Activated T-helper 2 cell treated with anti-CD3 and anti-CD28 coated beads, Interferon-gamma antibody, Interleukin-2, Interleukin-4, amounts not matched to agents 10 μg/mL and 5 μg/mL and 100 μg/mL, durations not matched to agents 14 hours and 24 hours and 36 hours (primary cell): ENCODE measurements at regions of chrX and their contacts with region 1.

Region 1: GRCh38 chrX:20515841-20516461 is 249.2 kb upstream of the RPS6KA3 start:
- DNase-seq: peak; percentile 10
- H3K4me3 Mint-ChIP-seq: no peak overlapping the region
- H3K27ac Mint-ChIP-seq: peak overlapping the region; percentile 89
- H3K4me1 Mint-ChIP-seq: peaks cover 37% of the 10 kb centered on the region
- H3K27me3 Mint-ChIP-seq: peaks cover 17% of the 10 kb centered on the region

Region 2: GRCh38 chrX:20224814-20225487 is 291.0 kb before region 1 on chrX:
- intact Hi-C with region 1: loop called (anchors 10 kb)
- DNase-seq: no peak
- H3K4me3 Mint-ChIP-seq: no peak overlapping the region
- H3K27ac Mint-ChIP-seq: peak overlapping the region; percentile 66
- H3K4me1 Mint-ChIP-seq: peaks cover 25% of the 10 kb centered on the region
- H3K27me3 Mint-ChIP-seq: no peaks in the 10 kb centered on the region

Region 3: GRCh38 chrX:20266810-20267606 is 248.9 kb before region 1 on chrX and contains the start of gene RPS6KA3:
- intact Hi-C with region 1: loop called (anchors 5 kb)
- DNase-seq: peak; percentile 85
- H3K4me3 Mint-ChIP-seq: peak within 1 kb of the TSS; percentile 95
- H3K27ac Mint-ChIP-seq: peak within 1 kb of the TSS; percentile 99
- H3K4me1 Mint-ChIP-seq: peaks cover 16% of the 10 kb centered on the region
- H3K27me3 Mint-ChIP-seq: peaks cover 13% of the 10 kb centered on the region
- total RNA-seq, gene RPS6KA3: 53.1 and 55.3 TPM in 2 replicates

Region 4: GRCh38 chrX:20382518-20383297 is 133.2 kb before region 1 on chrX:
- intact Hi-C with region 1: loop called (anchors 2 kb)
- DNase-seq: peak; percentile 9
- H3K4me3 Mint-ChIP-seq: no peak overlapping the region
- H3K27ac Mint-ChIP-seq: peak overlapping the region; percentile 65
- H3K4me1 Mint-ChIP-seq: peaks cover 25% of the 10 kb centered on the region
- H3K27me3 Mint-ChIP-seq: no peaks in the 10 kb centered on the region

Region 5: DNA sequence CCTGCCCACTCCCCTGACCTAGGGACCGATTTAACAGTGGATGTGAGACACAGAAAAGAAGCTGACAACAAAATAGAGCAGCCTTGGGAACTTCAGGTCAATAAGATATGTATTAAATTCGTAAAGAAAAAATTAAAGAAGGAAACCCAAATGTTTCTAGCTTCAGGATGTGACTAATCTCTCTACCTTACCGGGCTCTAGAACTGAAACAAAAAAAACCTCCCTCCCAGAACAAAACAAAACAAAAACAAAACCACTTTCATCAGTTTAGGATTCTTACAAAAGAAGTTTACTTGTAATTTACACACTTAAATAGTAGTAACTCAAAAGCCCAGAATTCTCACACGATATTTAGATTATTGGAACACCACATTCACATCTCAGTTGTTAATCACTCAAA is 63.5 kb before region 1 on chrX:
- intact Hi-C with region 1: loop called (anchors 1 kb)
- DNase-seq: no peak
- H3K4me3 Mint-ChIP-seq: peak overlapping the region; percentile 31
- H3K27ac Mint-ChIP-seq: peak overlapping the region; percentile 14
- H3K4me1 Mint-ChIP-seq: peaks cover 43% of the 10 kb centered on the region
- H3K27me3 Mint-ChIP-seq: peaks cover 2% of the 10 kb centered on the region

Region 6: DNA sequence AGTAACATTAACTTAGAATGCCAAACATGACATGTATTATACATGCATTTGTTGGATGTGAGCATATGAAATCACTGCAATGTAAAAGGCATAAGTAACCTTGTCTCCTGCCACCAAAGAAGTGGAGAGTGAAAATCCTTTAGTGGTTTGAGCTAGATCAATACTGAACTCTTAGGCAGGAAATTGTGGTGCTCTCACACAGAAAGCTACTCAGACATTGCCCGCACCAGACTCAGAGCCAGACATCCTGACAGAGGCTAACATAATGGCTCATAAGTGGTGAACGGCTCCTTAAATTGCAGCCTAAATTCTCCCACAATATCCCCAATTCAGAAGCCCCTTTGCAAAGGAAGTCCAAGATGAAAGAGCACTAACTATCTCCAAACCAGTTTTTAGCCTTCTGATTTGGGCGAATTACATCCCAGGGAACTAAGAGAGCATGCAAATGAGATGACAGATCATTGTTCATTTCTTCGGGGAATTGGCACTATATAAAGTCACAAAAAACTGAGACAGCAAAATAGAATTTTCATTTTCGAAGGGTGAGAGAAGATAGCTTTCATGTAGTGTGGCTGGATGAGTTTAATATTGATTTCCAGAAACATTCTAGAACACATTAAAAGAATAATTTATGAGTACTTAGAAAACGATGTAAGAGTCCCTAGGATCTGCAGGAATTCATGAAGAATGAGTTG is 15.6 kb before region 1 on chrX:
- intact Hi-C with region 1: loop called (anchors 2 kb)
- DNase-seq: no peak
- H3K4me3 Mint-ChIP-seq: peak overlapping the region; percentile 45
- H3K27ac Mint-ChIP-seq: no peak overlapping the region
- H3K4me1 Mint-ChIP-seq: peaks cover 14% of the 10 kb centered on the region
- H3K27me3 Mint-ChIP-seq: peaks cover 49% of the 10 kb centered on the region

Region 7: DNA sequence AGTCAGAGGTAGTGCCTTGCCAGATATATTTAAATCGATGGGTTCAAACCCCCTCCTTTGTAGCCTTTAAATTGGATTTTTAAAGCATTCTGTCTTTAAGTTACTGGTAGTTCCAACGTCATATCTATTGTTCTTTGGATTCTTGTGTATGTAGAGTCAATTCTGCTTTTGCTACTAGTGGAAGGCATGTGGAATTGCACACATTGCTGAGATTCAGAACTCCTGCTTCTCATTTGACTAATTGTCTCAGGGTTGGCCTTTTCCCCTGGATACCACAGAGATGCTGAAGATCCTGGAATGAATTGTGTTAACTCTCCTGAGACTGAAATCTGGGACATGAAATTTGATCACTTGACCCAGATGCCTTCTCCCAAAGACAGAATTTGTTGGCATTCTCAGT is 79.0 kb after region 1 on chrX:
- intact Hi-C with region 1: loop called (anchors 2 kb)
- DNase-seq: no peak
- H3K4me3 Mint-ChIP-seq: no peak overlapping the region
- H3K27ac Mint-ChIP-seq: no peak overlapping the region
- H3K4me1 Mint-ChIP-seq: peaks cover 24% of the 10 kb centered on the region
- H3K27me3 Mint-ChIP-seq: no peaks in the 10 kb centered on the region